PC-3 (cell line): ENCODE measurements at regions of chr12 and their contacts with region 1.

Region 1: GRCh38 chr12:96015672-96016071 is 19.5 kb upstream of the HAL start:
- DNase-seq: peak; percentile 50
- ATAC-seq: peak; percentile 89
- H3K4me3 ChIP-seq: no peak overlapping the region
- H3K27ac ChIP-seq: no peak overlapping the region
- H3K4me1 ChIP-seq: no peaks in the 10 kb centered on the region
- H3K27me3 ChIP-seq: no peaks in the 10 kb centered on the region
- CTCF ChIP-seq: peak; percentile 60

Region 2: GRCh38 chr12:96132819-96133218 is 117.1 kb after region 1 on chr12:
- CTCF ChIA-PET with region 1: no interaction called
- POLR2A ChIA-PET with region 1: no interaction called
- intact Hi-C with region 1: loop called (anchors 2 kb)
- DNase-seq: peak; percentile 23
- ATAC-seq: peak; percentile 69
- H3K4me3 ChIP-seq: no peak overlapping the region
- H3K27ac ChIP-seq: no peak overlapping the region
- H3K4me1 ChIP-seq: no peaks in the 10 kb centered on the region
- H3K27me3 ChIP-seq: 0 out of 2 replicates have a peak, but pooled peaks cover 3% of the 10 kb centered on the region
- CTCF ChIP-seq: peak; percentile 46; the same call in 1 of the 2 replicates

Region 3: GRCh38 chr12:96416033-96416801 is 400.5 kb after region 1 on chr12:
- CTCF ChIA-PET with region 1: no interaction called
- POLR2A ChIA-PET with region 1: no interaction called
- intact Hi-C with region 1: no loop called
- DNase-seq: peak; percentile 96
- ATAC-seq: peak; percentile 84
- H3K4me3 ChIP-seq: peak overlapping the region; percentile 21; the same call in 1 of the 2 replicates
- H3K27ac ChIP-seq: peak overlapping the region; percentile 86
- H3K4me1 ChIP-seq: peaks cover 22% of the 10 kb centered on the region
- H3K27me3 ChIP-seq: no peaks in the 10 kb centered on the region
- CTCF ChIP-seq: no peak